PC-3 (cell line): ENCODE measurements at regions of chr1 and their contacts with region 1.

Region 1: DNA sequence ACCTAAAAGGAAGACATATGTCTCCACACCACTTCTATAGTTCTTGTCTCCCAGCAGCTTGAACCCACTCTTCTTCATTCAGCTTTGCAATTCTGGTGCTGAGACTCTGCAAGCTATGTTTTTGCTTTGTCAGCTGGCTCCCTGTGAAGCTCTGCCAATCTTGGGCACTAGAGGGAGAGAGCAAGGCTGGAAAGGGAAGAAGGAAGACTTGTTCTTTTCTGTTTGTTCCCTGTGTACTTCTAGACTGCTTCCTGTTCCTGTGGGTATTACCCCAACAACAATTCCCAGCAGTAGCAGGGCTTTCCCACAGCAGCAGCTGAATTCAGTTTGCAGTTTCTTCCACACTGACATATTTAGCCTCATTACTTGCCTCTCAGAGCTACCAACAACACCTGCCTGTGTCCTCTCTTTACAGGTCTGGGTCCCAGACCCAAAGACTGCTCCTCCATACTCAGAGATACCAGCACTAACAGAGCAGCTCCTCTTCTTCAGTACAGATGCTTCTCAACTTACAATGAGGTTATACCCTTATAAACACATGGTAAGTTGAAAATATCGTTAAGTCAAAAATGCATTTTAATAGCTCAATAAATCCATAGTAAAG is 275.2 kb upstream of the NEGR1 start:
- DNase-seq: peak; percentile 49
- ATAC-seq: peak; percentile 72
- H3K4me3 ChIP-seq: no peak overlapping the region
- H3K27ac ChIP-seq: no peak overlapping the region
- H3K4me1 ChIP-seq: no peaks in the 10 kb centered on the region
- H3K27me3 ChIP-seq: no peaks in the 10 kb centered on the region
- CTCF ChIP-seq: peak; percentile 52

Region 2: DNA sequence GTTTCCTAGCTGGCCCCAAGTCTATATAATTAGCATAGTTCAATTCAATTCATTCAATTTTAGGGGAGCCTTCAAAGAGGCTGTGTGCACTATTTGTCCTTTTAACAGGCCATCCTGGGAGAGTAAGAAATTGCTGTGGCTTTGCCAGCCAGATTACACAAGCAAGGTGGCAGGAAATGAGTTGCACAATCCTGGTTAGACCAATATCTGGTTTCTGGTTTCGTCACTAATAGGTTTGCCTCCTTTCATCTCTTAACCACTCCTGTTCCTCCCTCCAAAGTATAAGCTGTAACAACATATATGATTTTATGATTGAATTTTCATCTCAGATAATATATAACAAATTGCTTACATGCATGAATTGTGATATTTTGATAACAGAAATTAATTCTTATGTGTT is 191.1 kb before region 1 on chr1:
- CTCF ChIA-PET with region 1: no interaction called
- POLR2A ChIA-PET with region 1: interaction called, 17 read pairs
- intact Hi-C with region 1: no loop called
- DNase-seq: peak; percentile 89
- ATAC-seq: peak; percentile 86
- H3K4me3 ChIP-seq: no peak overlapping the region
- H3K27ac ChIP-seq: no peak overlapping the region
- H3K4me1 ChIP-seq: peaks cover 17% of the 10 kb centered on the region
- H3K27me3 ChIP-seq: no peaks in the 10 kb centered on the region
- CTCF ChIP-seq: no peak

Region 3: GRCh38 chr1:72586023-72586685 is 28.6 kb after region 1 on chr1:
- CTCF ChIA-PET with region 1: no interaction called
- POLR2A ChIA-PET with region 1: no interaction called
- intact Hi-C with region 1: loop called (anchors 1 kb)
- DNase-seq: no peak
- ATAC-seq: no peak
- H3K4me3 ChIP-seq: no peak overlapping the region
- H3K27ac ChIP-seq: no peak overlapping the region
- H3K4me1 ChIP-seq: no peaks in the 10 kb centered on the region
- H3K27me3 ChIP-seq: no peaks in the 10 kb centered on the region
- CTCF ChIP-seq: no peak

Region 4: GRCh38 chr1:72623299-72623708 is 65.8 kb after region 1 on chr1:
- CTCF ChIA-PET with region 1: no interaction called
- POLR2A ChIA-PET with region 1: no interaction called
- intact Hi-C with region 1: no loop called
- DNase-seq: peak; percentile 78
- ATAC-seq: peak; percentile 79
- H3K4me3 ChIP-seq: peak overlapping the region; percentile 51; the same call in 1 of the 2 replicates
- H3K27ac ChIP-seq: no peak overlapping the region
- H3K4me1 ChIP-seq: peaks cover 13% of the 10 kb centered on the region; the same call in 1 of the 2 replicates
- H3K27me3 ChIP-seq: no peaks in the 10 kb centered on the region
- CTCF ChIP-seq: peak; percentile 84